ENCODE measurements at regions of chr13 and their contacts with region 1.

Region 1: DNA sequence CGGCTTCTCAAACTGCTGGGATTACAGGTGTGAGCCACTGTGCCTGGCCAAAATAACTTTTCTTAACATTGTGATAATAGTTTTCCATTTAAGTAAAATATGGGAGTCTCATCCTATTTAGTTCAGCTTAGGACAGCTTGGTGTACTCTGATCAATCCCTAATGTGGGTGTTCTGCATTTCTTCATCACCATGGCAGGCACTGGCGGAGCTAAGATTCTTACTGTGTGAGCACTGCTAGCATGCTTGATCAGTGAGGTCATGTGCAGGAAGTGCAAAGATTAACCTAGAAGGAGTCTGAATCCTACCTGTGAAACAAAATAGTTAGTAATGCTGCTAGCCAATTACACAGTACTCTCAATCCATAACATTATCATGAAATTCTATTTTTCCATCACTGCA is 1684.2 kb upstream of the SLC10A2 start:
- DNase-seq: no peak
- ATAC-seq: no peak
- H3K4me3 ChIP-seq: no peak overlapping the region
- H3K27ac ChIP-seq: no peak overlapping the region
- H3K4me1 ChIP-seq: no peaks in the 10 kb centered on the region
- H3K27me3 ChIP-seq: no peaks in the 10 kb centered on the region
- CTCF ChIP-seq: no peak
- POLR2A ChIP-seq: no peak
- RAD21 ChIP-seq: no peak

Region 2: GRCh38 chr13:104522235-104523072 is 227.9 kb before region 1 on chr13:
- CTCF ChIA-PET with region 1: no interaction called
- POLR2A ChIA-PET with region 1: no interaction called
- dilution Hi-C with region 1: no loop called
- in situ Hi-C with region 1: no loop called
- intact Hi-C with region 1: no loop called
- DNase-seq: no peak
- ATAC-seq: no peak
- H3K4me3 ChIP-seq: no peak overlapping the region
- H3K27ac ChIP-seq: no peak overlapping the region
- H3K4me1 ChIP-seq: no peaks in the 10 kb centered on the region
- H3K27me3 ChIP-seq: no peaks in the 10 kb centered on the region
- CTCF ChIP-seq: no peak
- POLR2A ChIP-seq: no peak
- RAD21 ChIP-seq: no peak

Region 3: GRCh38 chr13:104737713-104738112 is 12.7 kb before region 1 on chr13:
- CTCF ChIA-PET with region 1: no interaction called
- POLR2A ChIA-PET with region 1: no interaction called
- dilution Hi-C with region 1: no loop called
- in situ Hi-C with region 1: no loop called
- intact Hi-C with region 1: loop called (anchors 1 kb)
- DNase-seq: no peak
- ATAC-seq: no peak
- H3K4me3 ChIP-seq: no peak overlapping the region
- H3K27ac ChIP-seq: no peak overlapping the region
- H3K4me1 ChIP-seq: no peaks in the 10 kb centered on the region
- H3K27me3 ChIP-seq: no peaks in the 10 kb centered on the region
- CTCF ChIP-seq: no peak
- POLR2A ChIP-seq: no peak
- RAD21 ChIP-seq: no peak